ENCODE measurements at regions of chr15 and their contacts with region 1.

Region 1: GRCh38 chr15:60840306-60840702 is 361.4 kb upstream of the ICE2 start:
- DNase-seq: no peak
- ATAC-seq: peak; percentile 1
- H3K4me3 ChIP-seq: peak overlapping the region; percentile 51
- H3K4me3 Mint-ChIP-seq: peak overlapping the region; percentile 75 to 90 (median 82)
- H3K27ac ChIP-seq: peak overlapping the region; percentile 68
- H3K27ac Mint-ChIP-seq: peak overlapping the region; percentile 89 to 97 (median 96)
- H3K4me1 ChIP-seq: peaks cover 61 to 62% of the 10 kb centered on the region in 2 donors
- H3K4me1 Mint-ChIP-seq: peaks cover 50 to 96% (median 77%) of the 10 kb centered on the region in 7 donors
- H3K27me3 ChIP-seq: no peaks in the 10 kb centered on the region
- H3K27me3 Mint-ChIP-seq: peaks cover 0 to 9% (median 0%) of the 10 kb centered on the region in 5 donors

Region 2: DNA sequence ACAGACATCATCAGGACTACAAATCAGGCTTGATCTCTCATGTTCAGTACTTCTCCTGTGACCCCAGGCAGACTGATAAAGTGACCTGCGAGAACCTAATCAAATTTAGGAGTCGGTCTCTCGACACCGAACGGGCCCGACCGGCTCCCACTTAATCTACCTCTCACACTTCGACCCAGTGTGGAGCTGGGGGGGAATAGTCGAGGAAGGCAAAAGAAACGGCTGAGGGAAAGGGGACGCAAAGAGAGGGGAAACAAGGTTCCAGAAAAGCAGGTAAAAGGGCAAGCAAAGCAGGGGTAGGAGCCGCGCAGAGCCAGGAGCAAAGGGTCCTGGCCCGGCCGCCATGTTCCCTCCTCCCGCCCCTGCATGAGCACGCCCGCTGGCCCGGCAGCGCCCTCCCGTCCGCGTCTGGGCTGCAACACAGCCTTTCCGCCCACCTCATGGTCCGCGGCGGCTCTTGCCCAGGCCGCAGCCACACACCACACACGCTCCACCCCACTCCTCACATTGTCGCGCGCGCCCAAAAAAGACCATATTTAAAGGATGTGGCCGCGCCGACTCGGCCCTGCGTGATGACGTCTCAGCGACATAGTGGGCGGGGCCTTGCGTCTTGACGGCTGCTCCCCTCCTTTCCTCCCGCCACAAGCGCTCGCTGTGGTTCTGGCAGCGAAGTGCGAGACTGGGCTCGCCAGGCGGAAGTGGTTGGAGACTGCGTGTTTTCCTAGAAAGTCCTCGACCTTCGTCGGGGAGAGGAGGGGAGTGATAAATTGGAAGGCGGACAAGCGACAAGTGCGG is 361.5 kb before region 1 on chr15 and contains the start of gene ICE2:
- CTCF ChIA-PET with region 1: no interaction called
- POLR2A ChIA-PET with region 1: interaction called, 4 read pairs
- intact Hi-C with region 1: loop called in 1 of 2 experiments (anchors 10 kb)
- DNase-seq: peak; percentile 89 to 96 (median 94)
- ATAC-seq: peak; percentile 97
- H3K4me3 ChIP-seq: peak within 1 kb of the TSS; percentile 83
- H3K4me3 Mint-ChIP-seq: peak within 1 kb of the TSS; percentile 93 to 100 (median 98)
- H3K27ac ChIP-seq: peak within 1 kb of the TSS; percentile 93
- H3K27ac Mint-ChIP-seq: peak within 1 kb of the TSS; percentile 98 to 100 (median 99)
- H3K4me1 ChIP-seq: peaks cover 23 to 25% of the 10 kb centered on the region in 2 donors
- H3K4me1 Mint-ChIP-seq: peaks cover 43 to 86% (median 70%) of the 10 kb centered on the region in 7 donors
- H3K27me3 ChIP-seq: no peaks in the 10 kb centered on the region
- H3K27me3 Mint-ChIP-seq: no peaks in the 10 kb centered on the region
- total RNA-seq, gene ICE2: 44.8 to 70.9 (median 68.0) TPM

Region 3: GRCh38 chr15:60592371-60593169 is 247.7 kb before region 1 on chr15:
- CTCF ChIA-PET with region 1: interaction called, 4 read pairs
- POLR2A ChIA-PET with region 1: interaction called, 24 read pairs
- intact Hi-C with region 1: loop called in 1 of 2 experiments (anchors 1 kb)
- DNase-seq: peak; percentile 72 to 89 (median 86)
- ATAC-seq: peak; percentile 95
- H3K4me3 ChIP-seq: peak overlapping the region; percentile 75
- H3K4me3 Mint-ChIP-seq: peak overlapping the region; percentile 84 to 89 (median 86)
- H3K27ac ChIP-seq: peak overlapping the region; percentile 96
- H3K27ac Mint-ChIP-seq: peak overlapping the region; percentile 83 to 93 (median 85)
- H3K4me1 ChIP-seq: peaks cover 6 to 29% of the 10 kb centered on the region in 2 donors
- H3K4me1 Mint-ChIP-seq: peaks cover 19 to 53% (median 48%) of the 10 kb centered on the region in 7 donors
- H3K27me3 ChIP-seq: no peaks in the 10 kb centered on the region
- H3K27me3 Mint-ChIP-seq: peaks cover 0 to 4% (median 0%) of the 10 kb centered on the region in 5 donors

Region 4: DNA sequence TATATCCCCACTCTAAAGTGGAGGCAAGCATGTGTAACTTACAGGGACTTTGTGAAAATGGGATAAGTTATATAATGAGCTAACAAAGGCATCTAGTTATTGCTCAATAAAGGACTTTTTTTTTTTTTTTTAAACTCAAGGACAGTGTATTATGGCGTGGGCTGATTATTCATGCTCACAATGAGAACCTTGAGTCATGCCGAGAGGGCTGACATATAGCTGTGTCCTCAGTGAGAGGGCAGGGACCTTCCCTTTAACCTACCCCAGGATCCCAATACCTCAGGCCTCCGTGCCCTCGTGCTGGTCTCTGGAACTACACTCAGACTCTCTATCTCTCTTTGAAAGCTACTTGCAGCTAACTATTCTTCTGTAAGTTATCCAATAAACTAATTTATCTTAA is 41.5 kb before region 1 on chr15:
- CTCF ChIA-PET with region 1: interaction called, 6 read pairs
- POLR2A ChIA-PET with region 1: interaction called, 5 read pairs
- intact Hi-C with region 1: loop called (anchors 1 to 5 kb)
- DNase-seq: peak in 1 of 9 donors; percentile 48
- ATAC-seq: peak; percentile 36
- H3K4me3 ChIP-seq: no peak overlapping the region
- H3K4me3 Mint-ChIP-seq: peak overlapping the region in 1 of 10 donors; percentile 18
- H3K27ac ChIP-seq: no peak overlapping the region
- H3K27ac Mint-ChIP-seq: peak overlapping the region in 2 of 9 donors; percentile 20 to 36
- H3K4me1 ChIP-seq: peaks cover 36 to 37% of the 10 kb centered on the region in 2 donors
- H3K4me1 Mint-ChIP-seq: peaks cover 29 to 71% (median 50%) of the 10 kb centered on the region in 7 donors
- H3K27me3 ChIP-seq: no peaks in the 10 kb centered on the region
- H3K27me3 Mint-ChIP-seq: no peaks in the 10 kb centered on the region

Region 5: GRCh38 chr15:60854858-60855564 is 14.7 kb after region 1 on chr15:
- CTCF ChIA-PET with region 1: interaction called, 6 read pairs
- POLR2A ChIA-PET with region 1: interaction called, 10 read pairs
- intact Hi-C with region 1: no loop called
- DNase-seq: no peak
- ATAC-seq: no peak
- H3K4me3 ChIP-seq: no peak overlapping the region
- H3K4me3 Mint-ChIP-seq: no peak overlapping the region
- H3K27ac ChIP-seq: no peak overlapping the region
- H3K27ac Mint-ChIP-seq: peak overlapping the region in 1 of 9 donors; percentile 22
- H3K4me1 ChIP-seq: peaks cover 0 to under 1% of the 10 kb centered on the region in 2 donors
- H3K4me1 Mint-ChIP-seq: peaks cover 9 to 45% (median 21%) of the 10 kb centered on the region in 7 donors
- H3K27me3 ChIP-seq: no peaks in the 10 kb centered on the region
- H3K27me3 Mint-ChIP-seq: no peaks in the 10 kb centered on the region

Region 6: GRCh38 chr15:60905587-60905986 is 65.3 kb after region 1 on chr15:
- CTCF ChIA-PET with region 1: interaction called, 3 read pairs
- POLR2A ChIA-PET with region 1: no interaction called
- intact Hi-C with region 1: loop called in 1 of 2 experiments (anchors 2 kb)
- DNase-seq: peak in 6 of 9 donors; percentile 24 to 45 (median 38)
- ATAC-seq: peak; percentile 68
- H3K4me3 ChIP-seq: no peak overlapping the region
- H3K4me3 Mint-ChIP-seq: no peak overlapping the region
- H3K27ac ChIP-seq: no peak overlapping the region
- H3K27ac Mint-ChIP-seq: peak overlapping the region in 1 of 9 donors; percentile 16
- H3K4me1 ChIP-seq: no peaks in the 10 kb centered on the region
- H3K4me1 Mint-ChIP-seq: peaks cover 0 to 38% (median 2%) of the 10 kb centered on the region in 7 donors
- H3K27me3 ChIP-seq: no peaks in the 10 kb centered on the region
- H3K27me3 Mint-ChIP-seq: peaks cover 0 to 17% (median 0%) of the 10 kb centered on the region in 5 donors